Activated CD4-positive, alpha-beta memory T cell treated with anti-CD3 and anti-CD28 coated beads for 36 hours (primary cell): ENCODE measurements at regions of chr11 and their contacts with region 1.

Region 1: DNA sequence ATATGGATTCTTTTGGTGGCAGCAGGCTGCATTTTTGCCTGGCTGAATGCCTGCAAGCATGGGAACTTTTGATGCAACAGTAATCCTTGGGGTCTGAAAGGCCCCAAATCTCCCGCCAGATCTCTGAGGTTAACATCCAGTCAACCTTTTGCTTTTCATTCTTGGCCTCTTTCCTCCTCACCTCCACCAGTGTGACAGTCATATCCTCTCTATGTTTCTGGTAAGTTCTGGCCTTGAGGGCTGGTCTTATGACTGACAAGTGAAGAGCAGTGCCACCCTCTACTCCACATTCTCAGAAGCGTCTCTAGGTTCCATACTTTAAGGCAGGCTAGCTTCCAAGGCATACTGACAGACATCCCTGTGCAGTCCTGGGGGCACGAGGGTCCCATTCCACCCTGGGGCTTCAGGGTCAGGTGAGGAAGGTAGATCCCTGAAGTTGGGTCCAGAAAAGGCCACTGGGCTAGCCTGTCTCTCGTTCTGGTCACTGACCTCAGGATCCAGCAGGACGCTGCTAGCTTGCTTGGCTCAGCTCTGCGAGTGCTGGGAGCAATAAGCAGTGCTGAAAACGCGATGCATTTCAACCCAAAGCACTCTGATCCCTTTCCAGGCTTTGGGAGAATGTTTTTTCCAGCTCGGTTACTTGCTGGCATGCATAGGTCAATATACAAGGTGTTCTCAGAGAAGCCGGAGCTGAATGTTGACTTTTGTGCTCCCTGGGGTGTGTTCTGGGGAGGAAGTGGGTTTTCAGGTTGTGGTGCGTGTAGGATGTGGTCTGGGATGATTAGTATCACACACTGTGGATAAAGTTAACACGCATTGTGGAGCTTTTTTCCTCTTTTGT is 75.2 kb downstream of the PTPRJ start:
- DNase-seq: peak; percentile 88
- H3K4me3 Mint-ChIP-seq: peak overlapping the region; percentile 65
- H3K27ac Mint-ChIP-seq: peak overlapping the region; percentile 91
- H3K4me1 Mint-ChIP-seq: peaks cover 80% of the 10 kb centered on the region
- H3K27me3 Mint-ChIP-seq: no peaks in the 10 kb centered on the region

Region 2: DNA sequence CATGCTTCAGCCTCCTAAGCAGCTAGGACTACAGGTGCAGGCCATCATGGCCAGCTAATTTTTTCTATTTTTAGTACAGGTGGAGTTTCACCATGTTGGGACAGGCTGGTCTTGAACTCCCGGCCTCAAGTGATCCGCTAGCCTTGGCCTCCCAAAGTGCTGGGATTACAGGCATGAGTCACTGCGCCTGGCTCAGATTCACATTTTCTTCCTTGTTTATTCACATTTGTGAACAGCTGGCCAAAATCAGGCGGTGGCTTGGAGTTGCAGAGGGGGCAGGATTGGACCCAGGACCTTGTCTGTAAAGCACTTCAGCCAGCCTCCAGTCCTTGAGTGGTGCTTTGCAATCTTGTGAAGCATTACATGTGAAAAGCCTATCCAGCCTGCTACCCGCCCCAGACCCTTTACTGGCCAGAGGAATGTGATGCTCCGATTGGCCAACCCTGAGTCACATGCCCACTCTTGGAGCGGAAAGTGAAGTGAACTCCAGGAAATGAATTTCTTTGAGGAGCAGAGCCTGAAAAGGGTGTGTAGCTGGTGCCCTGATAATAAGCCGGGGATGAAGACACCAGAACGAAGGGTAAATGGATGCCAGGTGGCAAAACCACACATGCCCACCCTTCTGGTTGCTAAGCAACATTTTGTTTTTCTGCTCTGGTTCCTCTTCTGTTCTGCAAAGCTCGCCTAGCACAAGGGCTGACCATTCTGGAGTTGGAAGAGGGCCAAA is 137.7 kb before region 1 on chr11:
- CTCF ChIA-PET with region 1: no interaction called
- POLR2A ChIA-PET with region 1: no interaction called
- intact Hi-C with region 1: no loop called
- DNase-seq: no peak
- H3K4me3 Mint-ChIP-seq: no peak overlapping the region
- H3K27ac Mint-ChIP-seq: no peak overlapping the region
- H3K4me1 Mint-ChIP-seq: peaks cover 65% of the 10 kb centered on the region
- H3K27me3 Mint-ChIP-seq: no peaks in the 10 kb centered on the region

Region 3: DNA sequence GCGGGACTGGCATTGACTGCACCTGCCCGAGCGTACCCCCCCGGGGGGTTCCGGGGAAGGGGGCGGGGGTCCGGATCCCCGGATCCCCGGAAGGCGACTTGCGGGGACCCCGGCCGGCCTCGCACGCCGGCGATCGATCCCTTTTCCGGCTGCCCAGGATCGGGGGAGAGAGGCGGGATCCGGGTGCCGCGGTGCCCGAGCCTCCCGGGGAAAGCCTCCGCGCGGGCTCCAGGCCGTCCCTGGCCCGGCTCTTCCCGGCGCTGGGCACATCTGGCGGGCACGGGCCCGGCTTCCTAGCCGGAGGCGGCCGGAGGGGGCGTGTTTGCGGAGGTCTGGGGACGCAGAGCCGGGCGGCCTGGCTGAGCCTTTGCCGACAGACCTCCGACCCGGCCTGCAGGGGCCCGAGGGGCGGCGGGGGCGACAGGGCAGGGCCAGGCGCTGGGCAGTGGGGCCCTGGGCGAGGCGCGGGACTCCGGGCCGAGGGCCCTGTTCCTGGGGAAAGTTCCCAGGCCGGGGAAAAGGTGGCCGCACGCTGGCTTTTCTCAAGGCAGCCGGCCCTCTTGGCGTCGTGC is 74.4 kb before region 1 on chr11:
- CTCF ChIA-PET with region 1: interaction called, 7 read pairs
- POLR2A ChIA-PET with region 1: interaction called, 10 read pairs
- intact Hi-C with region 1: loop called (anchors 1 kb)
- DNase-seq: peak; percentile 39
- H3K4me3 Mint-ChIP-seq: peak overlapping the region; percentile 89
- H3K27ac Mint-ChIP-seq: peak overlapping the region; percentile 84
- H3K4me1 Mint-ChIP-seq: peaks cover 24% of the 10 kb centered on the region
- H3K27me3 Mint-ChIP-seq: no peaks in the 10 kb centered on the region

Region 4: DNA sequence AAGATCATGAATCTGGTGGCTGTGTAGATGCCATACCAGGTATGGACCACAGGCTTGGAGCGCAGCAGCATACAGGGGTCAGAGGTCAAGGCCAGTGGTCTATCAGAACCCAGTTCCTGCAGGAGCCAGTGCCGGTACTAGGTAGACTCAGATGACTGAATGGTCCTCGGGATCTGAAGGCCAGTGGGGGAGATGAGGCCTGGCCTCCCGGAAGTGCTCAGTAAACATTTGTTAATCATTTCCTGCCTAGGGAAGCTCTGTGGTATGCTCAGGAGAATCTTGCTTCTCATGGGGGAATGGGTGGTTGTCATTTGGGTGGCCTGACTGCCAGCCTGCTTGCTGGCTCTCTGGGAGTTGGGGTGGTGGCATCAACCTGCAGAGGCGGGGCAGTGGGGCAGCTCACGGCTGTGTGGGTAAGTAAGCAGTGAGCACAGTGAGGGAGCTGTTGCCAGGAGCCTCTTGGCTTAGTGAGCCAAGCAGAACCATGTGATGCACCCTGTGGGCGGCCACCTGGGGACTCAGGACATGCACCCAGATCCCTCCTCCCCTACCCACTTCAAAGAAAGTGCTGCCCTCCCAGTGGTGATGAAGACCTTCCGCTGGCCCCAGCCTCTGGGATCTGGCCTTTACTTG is 42.1 kb before region 1 on chr11:
- CTCF ChIA-PET with region 1: interaction called, 3 read pairs
- POLR2A ChIA-PET with region 1: interaction called, 18 read pairs
- intact Hi-C with region 1: no loop called
- DNase-seq: peak; percentile 86
- H3K4me3 Mint-ChIP-seq: peak overlapping the region; percentile 63
- H3K27ac Mint-ChIP-seq: peak overlapping the region; percentile 96
- H3K4me1 Mint-ChIP-seq: peaks cover 88% of the 10 kb centered on the region
- H3K27me3 Mint-ChIP-seq: no peaks in the 10 kb centered on the region

Region 5: GRCh38 chr11:48020092-48020755 is 35.3 kb before region 1 on chr11:
- CTCF ChIA-PET with region 1: interaction called, 6 read pairs
- POLR2A ChIA-PET with region 1: interaction called, 8 read pairs
- intact Hi-C with region 1: loop called (anchors 1 kb)
- DNase-seq: peak; percentile 80
- H3K4me3 Mint-ChIP-seq: peak overlapping the region; percentile 68
- H3K27ac Mint-ChIP-seq: peak overlapping the region; percentile 92
- H3K4me1 Mint-ChIP-seq: peaks cover 72% of the 10 kb centered on the region
- H3K27me3 Mint-ChIP-seq: no peaks in the 10 kb centered on the region

Region 6: DNA sequence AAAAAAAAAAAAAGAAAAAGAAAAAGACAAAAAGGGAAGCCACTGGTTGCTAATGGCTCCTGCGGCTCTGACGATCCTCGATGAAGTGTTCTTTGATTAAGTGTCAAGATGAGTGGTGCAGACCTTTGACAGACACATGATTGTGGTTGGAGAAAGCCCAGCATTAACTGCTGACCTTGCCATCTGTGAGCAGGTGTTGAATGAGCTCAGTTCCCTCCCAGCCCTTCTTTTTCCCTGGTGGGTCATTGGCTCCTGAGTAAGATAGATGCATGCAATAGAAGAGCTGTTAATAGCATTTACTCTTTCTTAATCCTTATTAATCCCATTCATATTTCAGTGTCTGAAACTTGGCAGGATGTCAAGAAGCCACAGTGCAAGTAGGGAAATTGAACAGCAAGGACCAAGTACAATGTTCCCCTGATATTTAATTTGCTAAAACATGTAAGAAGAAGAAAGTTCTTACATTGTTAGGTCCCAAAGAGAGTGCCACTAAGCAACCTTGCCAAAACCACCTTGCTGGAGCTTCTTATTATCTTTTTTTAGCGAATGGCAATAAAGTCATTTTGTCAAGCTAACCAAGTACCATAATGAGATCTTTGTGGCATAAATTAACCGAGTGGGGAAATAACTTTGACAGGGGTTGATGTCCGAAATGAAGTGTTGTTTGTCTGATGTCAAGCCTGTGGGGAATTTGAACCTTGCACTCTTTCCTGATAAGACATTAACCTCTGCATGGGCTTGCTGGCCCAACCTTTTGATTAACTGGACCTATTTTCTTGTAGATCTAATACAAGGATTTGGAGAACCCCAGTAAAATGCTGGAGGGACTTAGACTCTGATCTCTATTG is 38.5 kb after region 1 on chr11:
- CTCF ChIA-PET with region 1: no interaction called
- POLR2A ChIA-PET with region 1: interaction called, 7 read pairs
- intact Hi-C with region 1: loop called (anchors 1 kb)
- DNase-seq: peak; percentile 20
- H3K4me3 Mint-ChIP-seq: no peak overlapping the region
- H3K27ac Mint-ChIP-seq: peak overlapping the region; percentile 3
- H3K4me1 Mint-ChIP-seq: peaks cover 78% of the 10 kb centered on the region
- H3K27me3 Mint-ChIP-seq: no peaks in the 10 kb centered on the region

Region 7: GRCh38 chr11:48210052-48210451 is 154.5 kb after region 1 on chr11:
- CTCF ChIA-PET with region 1: no interaction called
- POLR2A ChIA-PET with region 1: no interaction called
- intact Hi-C with region 1: no loop called
- DNase-seq: no peak
- H3K4me3 Mint-ChIP-seq: no peak overlapping the region
- H3K27ac Mint-ChIP-seq: no peak overlapping the region
- H3K4me1 Mint-ChIP-seq: no peaks in the 10 kb centered on the region
- H3K27me3 Mint-ChIP-seq: peaks cover 3% of the 10 kb centered on the region